OCI-LY7 (cell line): ENCODE measurements at regions of chr16 and their contacts with region 1.

Region 1: GRCh38 chr16:22912654-22913053 is 98.7 kb downstream of the HS3ST2 start:
- DNase-seq: no peak
- H3K4me3 ChIP-seq: no peak overlapping the region
- H3K27ac ChIP-seq: no peak overlapping the region
- H3K4me1 ChIP-seq: no peaks in the 10 kb centered on the region
- CTCF ChIP-seq: no peak

Region 2: GRCh38 chr16:23060458-23061320 is 148.0 kb after region 1 on chr16:
- CTCF ChIA-PET with region 1: interaction called, 11 read pairs
- POLR2A ChIA-PET with region 1: no interaction called
- intact Hi-C with region 1: no loop called
- DNase-seq: peak; percentile 69
- H3K4me3 ChIP-seq: no peak overlapping the region
- H3K27ac ChIP-seq: no peak overlapping the region
- H3K4me1 ChIP-seq: no peaks in the 10 kb centered on the region
- CTCF ChIP-seq: peak; percentile 93